Panc1 (cell line): ENCODE measurements at regions of chr12 and their contacts with region 1.

Region 1: DNA sequence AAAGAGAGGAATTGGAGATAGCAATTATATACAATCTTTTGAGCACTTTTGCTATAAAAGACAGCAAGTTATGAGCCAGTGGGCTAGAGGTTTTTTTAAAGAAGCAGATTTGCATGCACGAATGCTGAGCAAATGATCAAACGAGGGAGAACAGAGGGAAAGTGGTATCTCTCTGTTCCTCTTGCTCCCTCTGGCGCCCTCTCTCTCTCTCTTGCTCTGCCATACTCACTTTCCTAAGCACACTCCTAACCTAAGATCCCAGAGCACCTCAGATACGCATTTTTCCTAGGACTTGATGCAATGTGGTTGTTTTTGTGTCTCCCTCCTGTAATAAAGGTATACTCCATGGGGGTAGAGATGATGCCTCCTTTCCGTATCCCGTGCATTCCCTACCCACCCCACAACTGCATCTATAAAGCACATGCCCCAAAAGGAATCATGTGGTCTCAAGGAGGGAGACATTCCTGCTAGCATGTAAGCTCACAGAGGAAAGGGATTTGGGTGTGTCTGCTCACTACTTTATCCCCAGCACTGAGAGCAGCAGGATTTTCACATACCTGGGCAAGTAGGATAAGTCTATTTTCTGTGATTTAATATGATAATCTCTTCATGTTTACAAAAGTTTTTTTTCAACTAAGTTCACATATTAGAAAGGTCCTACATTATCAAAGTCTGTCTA is 270.2 kb downstream of the SSPN start:
- DNase-seq: no peak
- ATAC-seq: no peak
- H3K4me3 ChIP-seq: no peak overlapping the region
- H3K27ac ChIP-seq: no peak overlapping the region
- H3K4me1 ChIP-seq: no peaks in the 10 kb centered on the region
- H3K27me3 ChIP-seq: no peaks in the 10 kb centered on the region
- CTCF ChIP-seq: peak; percentile 54

Region 2: DNA sequence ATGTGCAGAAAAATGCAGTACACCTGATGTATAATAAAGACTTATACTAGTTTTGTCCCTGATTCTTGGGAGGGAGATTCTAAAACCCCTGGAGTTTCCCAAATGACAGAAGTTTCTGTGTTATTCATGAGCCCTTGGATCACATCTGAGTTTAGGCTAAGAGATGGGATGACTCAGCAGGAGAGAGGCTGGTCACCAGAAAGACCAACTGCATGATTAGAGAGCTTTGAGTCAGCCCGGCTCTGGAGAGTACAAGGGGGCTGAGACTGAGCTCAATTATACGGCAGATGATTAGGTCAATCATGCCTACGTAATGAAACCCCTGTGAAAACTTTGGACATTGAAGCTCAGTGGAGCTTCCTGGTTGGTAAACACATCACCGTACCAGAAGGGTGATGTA is 96.0 kb before region 1 on chr12:
- CTCF ChIA-PET with region 1: no interaction called
- POLR2A ChIA-PET with region 1: no interaction called
- in situ Hi-C with region 1: no loop called
- intact Hi-C with region 1: no loop called
- DNase-seq: no peak
- ATAC-seq: no peak; the same call in 1 of the 2 replicates
- H3K4me3 ChIP-seq: no peak overlapping the region
- H3K27ac ChIP-seq: no peak overlapping the region
- H3K4me1 ChIP-seq: no peaks in the 10 kb centered on the region
- H3K27me3 ChIP-seq: no peaks in the 10 kb centered on the region
- CTCF ChIP-seq: no peak

Region 3: GRCh38 chr12:26441434-26441833 is 24.1 kb before region 1 on chr12:
- CTCF ChIA-PET with region 1: no interaction called
- POLR2A ChIA-PET with region 1: no interaction called
- in situ Hi-C with region 1: no loop called
- intact Hi-C with region 1: loop called (anchors 1 kb)
- DNase-seq: no peak
- ATAC-seq: no peak
- H3K4me3 ChIP-seq: no peak overlapping the region
- H3K27ac ChIP-seq: no peak overlapping the region
- H3K4me1 ChIP-seq: no peaks in the 10 kb centered on the region
- H3K27me3 ChIP-seq: no peaks in the 10 kb centered on the region
- CTCF ChIP-seq: no peak